Activated B cell treated with CpG ODN at 0.5 μM for 24 hours (primary cell): ENCODE measurements at regions of chr22 and their contacts with region 1.

Region 1: DNA sequence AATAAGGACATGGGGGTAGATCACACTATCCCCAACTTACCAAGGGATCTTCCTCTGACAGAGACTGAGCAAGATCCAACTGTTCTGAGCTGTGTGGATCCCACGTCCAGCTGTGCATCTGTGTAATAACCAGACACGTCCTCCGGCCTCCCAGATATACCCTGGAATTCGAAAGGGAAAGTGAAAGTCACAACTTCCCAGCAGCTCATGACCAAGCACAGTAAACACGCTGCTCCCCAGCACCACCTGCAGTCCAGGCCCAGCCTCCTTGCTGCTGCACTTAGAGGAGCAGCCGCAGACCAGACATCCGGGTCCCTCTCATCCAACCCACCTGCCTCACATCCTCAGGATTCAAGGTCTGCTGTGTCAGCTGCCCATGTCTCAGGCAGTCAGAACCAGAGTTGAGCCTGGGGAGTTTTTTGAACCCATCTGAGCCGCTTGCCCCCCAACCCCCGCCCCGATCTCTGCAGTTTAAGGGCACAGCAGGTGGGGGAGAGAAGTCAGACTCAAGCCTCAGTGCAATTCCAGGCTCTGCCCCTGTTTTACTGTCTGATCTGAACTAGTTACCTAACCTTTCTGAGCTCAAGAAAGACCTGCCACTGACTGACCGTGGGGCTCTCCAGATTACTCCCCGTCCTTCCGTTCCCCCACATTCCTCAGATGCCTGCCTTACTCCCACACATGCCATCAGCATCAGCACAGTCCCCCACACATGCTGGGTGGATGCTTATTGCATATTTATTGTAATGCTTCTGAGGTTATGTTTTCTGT is at the start of gene APOL2:
- DNase-seq: peak; percentile 56
- ATAC-seq: peak; percentile 98
- H3K4me3 Mint-ChIP-seq: peak within 1 kb of the TSS; percentile 98
- H3K27ac Mint-ChIP-seq: peak within 1 kb of the TSS; percentile 94
- H3K4me1 Mint-ChIP-seq: peaks cover 46% of the 10 kb centered on the region
- H3K27me3 Mint-ChIP-seq: no peaks in the 10 kb centered on the region
- CTCF ChIP-seq: no peak
- total RNA-seq, gene APOL2: 35.7 and 38.3 TPM in 2 replicates

Region 2: GRCh38 chr22:36252754-36253517 is 13.3 kb after region 1 on chr22 and contains the start of gene APOL1:
- CTCF ChIA-PET with region 1: interaction called, 7 read pairs
- POLR2A ChIA-PET with region 1: interaction called, 13 read pairs
- intact Hi-C with region 1: loop called (anchors 2 kb)
- DNase-seq: peak; percentile 26
- ATAC-seq: peak; percentile 94
- H3K4me3 Mint-ChIP-seq: peak within 1 kb of the TSS; percentile 91
- H3K27ac Mint-ChIP-seq: peak within 1 kb of the TSS; percentile 86
- H3K4me1 Mint-ChIP-seq: peaks cover 26% of the 10 kb centered on the region
- H3K27me3 Mint-ChIP-seq: no peaks in the 10 kb centered on the region
- CTCF ChIP-seq: no peak
- total RNA-seq, gene APOL1: 10.4 and 10.7 TPM in 2 replicates

Region 3: GRCh38 chr22:36277482-36278291 is 38.1 kb after region 1 on chr22:
- CTCF ChIA-PET with region 1: interaction called, 10 read pairs
- POLR2A ChIA-PET with region 1: no interaction called
- intact Hi-C with region 1: loop called (anchors 1 kb)
- DNase-seq: peak; percentile 43
- ATAC-seq: peak; percentile 86
- H3K4me3 Mint-ChIP-seq: no peak overlapping the region
- H3K27ac Mint-ChIP-seq: peak overlapping the region; percentile 46
- H3K4me1 Mint-ChIP-seq: peaks cover 17% of the 10 kb centered on the region
- H3K27me3 Mint-ChIP-seq: no peaks in the 10 kb centered on the region
- CTCF ChIP-seq: no peak

Region 4: DNA sequence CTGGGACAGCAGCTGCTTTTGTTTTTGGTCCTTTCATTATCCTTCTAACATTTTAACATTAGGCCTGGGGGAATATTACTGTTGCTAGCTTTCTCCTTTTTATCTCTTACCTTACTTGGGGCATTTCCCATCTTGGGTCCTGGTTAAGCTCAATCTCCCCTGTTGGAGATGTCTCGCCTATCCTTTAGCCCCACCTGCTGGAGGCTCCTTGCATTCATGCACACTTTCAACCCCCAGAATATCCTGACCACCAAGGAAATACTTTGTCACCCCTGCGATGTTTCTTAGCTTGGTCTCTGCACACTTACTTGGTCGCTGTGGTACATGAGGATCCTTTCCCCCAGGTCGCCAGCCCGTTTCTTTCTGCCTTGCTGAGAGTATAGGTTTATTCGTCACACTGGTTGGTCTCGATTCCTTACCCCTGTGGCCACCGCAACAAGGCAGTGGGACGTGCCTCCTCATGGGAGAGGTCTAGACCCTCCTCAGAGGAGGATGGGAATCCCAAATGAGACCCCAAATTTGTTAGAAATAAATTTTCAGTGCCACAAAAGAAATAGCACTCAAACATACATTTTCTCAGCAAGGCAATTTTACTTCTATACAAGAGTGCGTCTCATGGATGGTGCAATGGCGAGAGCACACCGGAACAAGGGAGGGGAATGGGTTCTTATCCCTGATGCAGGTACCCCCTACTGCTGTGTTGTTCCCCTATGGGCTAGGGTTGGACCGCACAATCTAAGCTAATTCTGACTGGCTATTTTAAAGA is 247.2 kb after region 1 on chr22:
- CTCF ChIA-PET with region 1: interaction called, 12 read pairs
- POLR2A ChIA-PET with region 1: interaction called, 4 read pairs
- intact Hi-C with region 1: no loop called
- DNase-seq: no peak
- ATAC-seq: no peak
- H3K4me3 Mint-ChIP-seq: no peak overlapping the region
- H3K27ac Mint-ChIP-seq: no peak overlapping the region
- H3K4me1 Mint-ChIP-seq: peaks cover 12% of the 10 kb centered on the region
- H3K27me3 Mint-ChIP-seq: no peaks in the 10 kb centered on the region
- CTCF ChIP-seq: peak; percentile 19